Posterior vena cava (tissue), 2 donors: ENCODE measurements at regions of chrX and their contacts with region 1.

Region 1: GRCh38 chrX:150269605-150270254 is 93.4 kb upstream of the MAMLD1 start:
- DNase-seq: no peak

Region 2: DNA sequence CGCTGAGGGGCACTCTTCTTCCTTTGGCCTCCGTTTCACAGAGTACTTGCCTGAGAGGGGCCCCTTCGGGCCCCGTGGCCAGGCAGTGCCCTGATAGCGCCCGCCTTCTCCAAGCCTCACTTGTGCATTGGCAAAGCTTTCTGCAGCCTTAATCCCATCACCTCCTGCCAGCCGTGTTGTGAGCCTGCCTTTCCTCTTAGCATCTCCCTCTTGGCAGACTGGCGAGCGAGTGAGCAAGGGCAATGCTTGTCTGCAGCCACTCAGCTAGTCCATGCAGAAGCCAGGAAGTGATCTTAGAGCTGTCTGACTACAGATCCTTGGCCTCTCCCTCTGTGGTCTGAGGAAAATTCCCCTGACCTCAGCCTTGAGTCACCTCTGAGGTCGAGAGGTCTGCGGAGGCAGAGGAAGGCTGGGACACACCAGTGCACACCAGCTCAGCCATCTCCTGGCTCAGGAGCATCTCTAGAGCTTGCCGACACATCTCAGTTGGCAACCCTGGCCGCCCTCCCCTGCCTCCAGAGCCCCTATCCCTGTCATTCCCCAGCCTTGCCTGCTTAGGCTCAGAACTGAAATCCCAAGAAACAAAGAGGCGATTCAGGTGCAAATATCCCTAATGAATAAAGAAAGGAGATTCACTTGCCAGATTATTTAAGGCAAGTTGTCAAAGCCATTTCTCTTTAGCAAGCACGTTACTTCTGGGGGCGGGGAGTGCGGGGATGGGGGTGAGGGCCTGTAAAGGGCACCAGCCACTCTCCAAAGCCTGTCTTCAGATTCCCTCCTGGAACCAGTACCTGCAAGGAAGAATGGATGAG is 50.1 kb before region 1 on chrX:
- intact Hi-C with region 1: no loop called
- DNase-seq: no peak

Region 3: DNA sequence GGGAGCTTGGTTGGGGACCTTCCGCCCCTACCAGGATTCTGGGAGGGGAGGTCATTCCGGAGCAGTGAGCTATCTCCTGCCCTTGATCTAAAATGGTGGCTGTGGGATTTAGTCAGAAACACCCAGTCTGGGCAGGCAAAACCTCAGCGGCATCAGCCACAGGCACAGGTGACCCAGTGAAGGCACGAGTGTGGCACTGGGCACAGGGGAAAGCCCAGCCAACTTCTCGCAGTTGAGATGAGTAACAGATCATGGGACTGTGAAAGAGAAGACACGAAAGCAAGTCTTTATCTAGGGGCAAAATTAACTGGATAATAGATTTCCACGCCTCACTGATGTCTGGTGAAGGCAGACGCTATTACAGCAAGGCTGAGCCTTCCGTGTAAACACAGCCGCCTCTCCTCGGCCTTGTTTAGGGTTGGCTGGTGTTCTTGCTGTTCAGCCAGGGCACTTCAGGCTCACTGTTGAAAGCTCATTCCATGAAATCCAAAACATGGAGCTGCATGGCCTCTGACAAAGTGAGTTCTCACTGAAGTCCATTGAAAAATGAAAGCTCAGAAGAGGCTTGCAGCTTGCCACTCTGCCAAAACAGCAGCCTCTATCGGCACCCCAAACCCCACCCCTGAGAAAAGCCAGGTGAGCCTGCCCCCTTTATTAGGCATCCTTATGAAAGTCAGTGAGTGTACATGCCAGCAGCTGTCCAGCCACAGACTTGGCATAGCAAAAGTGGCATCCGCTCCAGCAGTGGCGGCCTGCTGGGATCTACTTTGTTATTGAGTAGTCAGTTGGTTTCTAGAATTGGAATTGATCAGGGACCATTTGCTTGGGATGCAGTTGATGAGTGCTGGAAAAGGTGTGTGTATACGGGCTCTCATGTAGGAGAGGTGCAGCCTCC is 196.4 kb after region 1 on chrX:
- intact Hi-C with region 1: no loop called
- DNase-seq: no peak

Region 4: DNA sequence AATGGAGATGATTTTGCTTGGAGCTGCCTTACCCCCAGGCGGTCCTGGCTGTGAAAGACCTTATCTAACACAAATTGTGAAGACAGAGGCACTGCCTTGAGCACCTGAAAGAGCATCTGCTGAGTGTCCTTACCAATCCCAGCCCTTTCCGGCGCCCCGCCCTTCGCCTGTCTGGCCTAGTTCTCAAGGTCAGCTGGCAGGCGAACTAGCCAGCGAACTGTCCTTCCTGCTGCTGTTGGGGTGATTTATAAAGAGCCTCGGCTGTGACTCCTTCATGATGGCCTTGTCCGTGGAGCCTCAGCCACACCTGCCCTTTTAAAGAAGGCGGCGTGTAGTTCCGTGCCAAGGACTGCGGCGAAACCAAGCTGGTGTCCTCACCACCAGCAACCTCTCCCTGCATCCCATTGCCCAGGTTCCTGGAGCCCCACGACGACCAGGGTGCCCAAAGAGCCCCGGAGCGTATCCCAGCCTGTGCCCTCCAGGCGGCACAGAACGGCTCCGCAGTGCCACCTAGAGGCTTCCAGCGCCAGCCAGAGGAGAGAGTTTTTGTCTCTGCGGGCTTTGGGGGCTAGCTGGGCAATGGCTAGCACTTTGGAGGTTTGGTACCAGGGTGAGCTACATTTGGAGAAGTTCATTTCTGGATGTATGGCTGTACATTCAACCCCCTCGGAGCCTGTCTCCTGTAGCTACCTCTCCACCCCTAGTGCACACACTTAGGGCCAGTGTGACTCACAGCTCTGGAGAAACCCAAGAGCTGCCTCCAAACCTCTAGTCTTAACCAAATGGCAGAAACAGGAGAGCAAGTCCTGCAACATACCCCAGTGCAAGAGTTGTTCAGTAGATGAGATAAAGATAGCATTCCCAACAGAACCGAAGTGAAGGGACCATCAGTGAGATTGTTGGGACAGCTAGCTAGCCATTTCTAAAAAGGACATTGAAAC is 1090.5 kb after region 1 on chrX:
- intact Hi-C with region 1: loop called in 1 of 2 experiments (anchors 5 kb)
- DNase-seq: no peak